Tibial artery (tissue), 4 donors: ENCODE measurements at regions of chr10 and their contacts with region 1.

Region 1: GRCh38 chr10:89522466-89522865 is 12.9 kb downstream of the SLC16A12 start:
- DNase-seq: no peak
- H3K4me3 ChIP-seq: no peak overlapping the region
- H3K27ac ChIP-seq: peak overlapping the region in 1 of 2 donors; percentile 32
- H3K4me1 ChIP-seq: peaks cover 0 to 38% (median 13%) of the 10 kb centered on the region in 4 donors
- H3K27me3 ChIP-seq: no peaks in the 10 kb centered on the region
- CTCF ChIP-seq: no peak

Region 2: GRCh38 chr10:89481662-89482061 is 40.8 kb before region 1 on chr10:
- intact Hi-C with region 1: loop called (anchors 5 kb)
- DNase-seq: no peak
- H3K4me3 ChIP-seq: no peak overlapping the region
- H3K27ac ChIP-seq: peak overlapping the region in 1 of 2 donors; percentile 67
- H3K4me1 ChIP-seq: peaks cover 0 to 63% (median 30%) of the 10 kb centered on the region in 4 donors
- H3K27me3 ChIP-seq: no peaks in the 10 kb centered on the region
- CTCF ChIP-seq: no peak

Region 3: DNA sequence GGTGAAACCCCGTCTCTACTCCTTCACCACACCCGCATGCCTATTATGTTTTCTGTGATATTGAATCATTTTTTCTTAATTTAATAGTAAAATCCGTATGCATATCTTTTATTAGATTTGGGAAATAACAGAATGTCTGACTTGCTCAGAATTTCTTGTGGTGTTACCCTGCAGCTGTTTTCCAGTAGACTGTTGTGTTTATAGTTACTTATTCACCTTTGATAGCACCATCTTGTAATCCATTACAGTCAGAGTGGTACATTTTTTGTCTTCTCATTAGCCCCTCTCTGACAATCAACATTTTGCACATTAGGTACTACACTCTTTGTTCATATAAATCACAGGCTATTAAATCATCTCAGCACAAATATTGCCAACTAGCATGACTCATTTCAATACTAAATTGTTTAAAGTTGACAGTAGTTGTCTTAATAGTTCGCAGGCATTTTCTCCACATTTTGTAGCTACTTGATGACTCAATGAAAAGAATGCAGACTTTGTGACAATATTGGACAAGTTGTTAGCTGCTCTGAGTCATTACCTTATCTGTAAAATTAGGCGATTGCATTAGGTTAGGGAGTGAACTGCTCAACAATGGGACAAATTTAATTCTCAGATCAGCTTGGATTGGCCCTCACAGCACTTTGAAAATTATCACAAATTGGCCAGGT is 30.7 kb after region 1 on chr10:
- intact Hi-C with region 1: loop called (anchors 2 kb)
- DNase-seq: no peak
- H3K4me3 ChIP-seq: no peak overlapping the region
- H3K27ac ChIP-seq: peak overlapping the region in 1 of 2 donors; percentile 8
- H3K4me1 ChIP-seq: peaks cover 0 to 5% (median 0%) of the 10 kb centered on the region in 4 donors
- H3K27me3 ChIP-seq: no peaks in the 10 kb centered on the region
- CTCF ChIP-seq: no peak